MCF 10A (cell line): ENCODE measurements at regions of chr14 and their contacts with region 1.

Region 1: DNA sequence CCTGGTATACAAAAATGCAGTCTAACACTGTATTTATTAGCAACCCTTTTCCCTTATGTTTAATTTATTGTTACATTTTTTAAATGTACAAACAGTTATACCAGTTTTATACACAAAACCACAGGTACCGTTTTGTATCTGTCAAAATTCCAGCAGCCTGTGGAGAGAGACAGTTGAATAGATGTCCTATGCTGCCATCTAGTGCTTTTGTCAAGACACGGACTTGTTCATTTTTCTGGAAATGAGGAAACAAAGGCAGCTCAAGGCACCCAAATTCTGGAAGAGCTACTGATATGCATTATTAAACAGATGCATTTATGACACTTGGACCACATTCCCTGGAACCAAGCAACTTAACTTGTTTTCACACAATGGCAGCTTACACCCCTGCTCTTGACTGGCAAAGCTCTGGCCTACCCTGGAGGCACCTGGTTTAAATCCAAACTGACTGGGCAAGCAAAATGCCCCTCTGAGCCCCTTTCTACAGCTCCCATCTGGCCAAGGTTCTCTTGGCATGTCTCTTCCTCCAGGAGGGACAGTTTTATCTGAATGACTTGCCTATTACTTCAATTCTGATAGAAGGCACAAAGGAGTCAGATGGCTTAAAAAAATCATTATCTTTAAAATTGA is 286.9 kb upstream of the PRKD1 start:
- DNase-seq: peak; percentile 72
- H3K4me3 Mint-ChIP-seq: no peak overlapping the region
- H3K27ac Mint-ChIP-seq: no peak overlapping the region
- H3K4me1 Mint-ChIP-seq: peaks cover 4% of the 10 kb centered on the region
- H3K27me3 Mint-ChIP-seq: no peaks in the 10 kb centered on the region
- CTCF ChIP-seq: peak; percentile 54

Region 2: DNA sequence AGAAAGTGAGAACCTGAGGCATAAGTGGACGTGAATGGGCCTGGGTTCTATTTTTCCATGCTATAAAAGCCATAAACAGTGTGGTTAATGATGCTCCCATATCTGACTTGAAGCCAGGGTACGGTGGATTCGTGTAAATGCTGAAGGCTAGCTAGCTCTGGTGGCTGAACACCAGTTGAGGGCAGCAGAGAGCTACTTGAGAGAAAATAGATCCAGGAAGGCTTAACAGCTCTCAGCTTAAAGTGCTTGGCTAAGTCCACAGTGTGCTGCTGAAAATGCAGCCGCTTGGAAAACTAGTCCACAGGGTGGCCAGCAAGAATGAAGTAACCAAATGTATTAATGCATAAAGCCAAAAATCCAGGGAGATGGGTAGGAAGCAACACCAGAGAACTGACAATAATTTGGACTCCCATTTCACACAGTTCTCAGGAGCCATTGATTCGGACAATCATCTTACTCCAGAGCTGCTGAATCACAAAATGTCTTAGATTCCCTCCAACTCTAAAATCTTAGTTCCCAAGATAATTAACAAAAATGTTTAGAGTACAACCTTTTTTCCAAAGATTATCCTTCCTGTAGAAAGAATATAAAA is 1463.0 kb before region 1 on chr14:
- CTCF ChIA-PET with region 1: interaction called, 48 read pairs
- POLR2A ChIA-PET with region 1: interaction called, 3 read pairs
- intact Hi-C with region 1: loop called (anchors 10 kb)
- DNase-seq: peak; percentile 73
- H3K4me3 Mint-ChIP-seq: no peak overlapping the region
- H3K27ac Mint-ChIP-seq: no peak overlapping the region
- H3K4me1 Mint-ChIP-seq: peaks cover 13% of the 10 kb centered on the region
- H3K27me3 Mint-ChIP-seq: peaks cover 26% of the 10 kb centered on the region
- CTCF ChIP-seq: peak; percentile 46

Region 3: DNA sequence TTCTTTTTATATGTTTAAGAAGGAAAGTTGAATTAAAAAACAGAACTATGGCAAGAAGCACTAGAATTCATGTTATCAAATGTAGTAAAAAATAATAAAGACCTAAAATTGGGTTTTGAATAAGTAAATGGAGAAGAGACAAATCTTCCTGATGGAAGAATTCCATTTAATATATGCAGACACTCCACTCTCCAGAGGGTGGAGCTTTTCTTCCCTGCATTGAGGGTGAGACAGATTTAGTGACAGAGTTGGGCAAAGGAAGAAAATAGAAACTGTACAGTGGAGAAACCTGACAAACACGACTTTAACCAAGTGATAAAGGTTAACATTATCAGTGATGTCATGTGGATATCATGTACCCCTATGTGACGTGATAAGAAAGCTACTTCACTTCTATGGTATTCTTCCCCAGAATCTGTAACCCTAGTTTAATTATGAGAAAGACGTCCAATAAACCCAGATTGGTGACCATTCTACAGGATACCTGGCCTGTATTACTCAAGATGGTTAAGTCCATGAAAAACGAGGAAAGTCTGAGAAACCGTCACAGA is 504.5 kb before region 1 on chr14:
- CTCF ChIA-PET with region 1: no interaction called
- POLR2A ChIA-PET with region 1: no interaction called
- intact Hi-C with region 1: loop called (anchors 10 kb)
- DNase-seq: peak; percentile 20
- H3K4me3 Mint-ChIP-seq: no peak overlapping the region
- H3K27ac Mint-ChIP-seq: no peak overlapping the region
- H3K4me1 Mint-ChIP-seq: peaks cover 12% of the 10 kb centered on the region
- H3K27me3 Mint-ChIP-seq: no peaks in the 10 kb centered on the region
- CTCF ChIP-seq: no peak

Region 4: DNA sequence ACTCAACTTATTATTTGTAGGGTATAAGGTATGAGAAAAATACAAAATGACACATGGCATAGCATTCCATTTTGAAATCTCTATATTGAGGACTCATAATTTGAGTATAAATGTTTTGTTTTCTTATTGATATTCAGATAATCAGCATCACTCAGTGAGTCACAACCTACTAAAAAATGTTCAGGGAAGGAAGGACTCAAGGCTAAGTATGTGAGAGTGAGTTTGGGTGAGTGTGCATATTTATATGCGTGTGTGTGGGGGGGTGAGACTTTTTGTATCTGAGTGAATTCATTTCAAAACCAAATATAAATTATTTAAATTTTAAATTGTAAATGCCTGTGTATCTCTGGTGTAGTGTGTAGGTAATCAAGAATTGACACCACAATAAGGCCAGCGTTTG is 199.1 kb before region 1 on chr14:
- CTCF ChIA-PET with region 1: interaction called, 16 read pairs
- POLR2A ChIA-PET with region 1: no interaction called
- intact Hi-C with region 1: no loop called
- DNase-seq: no peak
- H3K4me3 Mint-ChIP-seq: no peak overlapping the region
- H3K27ac Mint-ChIP-seq: no peak overlapping the region
- H3K4me1 Mint-ChIP-seq: no peaks in the 10 kb centered on the region
- H3K27me3 Mint-ChIP-seq: no peaks in the 10 kb centered on the region
- CTCF ChIP-seq: no peak

Region 5: DNA sequence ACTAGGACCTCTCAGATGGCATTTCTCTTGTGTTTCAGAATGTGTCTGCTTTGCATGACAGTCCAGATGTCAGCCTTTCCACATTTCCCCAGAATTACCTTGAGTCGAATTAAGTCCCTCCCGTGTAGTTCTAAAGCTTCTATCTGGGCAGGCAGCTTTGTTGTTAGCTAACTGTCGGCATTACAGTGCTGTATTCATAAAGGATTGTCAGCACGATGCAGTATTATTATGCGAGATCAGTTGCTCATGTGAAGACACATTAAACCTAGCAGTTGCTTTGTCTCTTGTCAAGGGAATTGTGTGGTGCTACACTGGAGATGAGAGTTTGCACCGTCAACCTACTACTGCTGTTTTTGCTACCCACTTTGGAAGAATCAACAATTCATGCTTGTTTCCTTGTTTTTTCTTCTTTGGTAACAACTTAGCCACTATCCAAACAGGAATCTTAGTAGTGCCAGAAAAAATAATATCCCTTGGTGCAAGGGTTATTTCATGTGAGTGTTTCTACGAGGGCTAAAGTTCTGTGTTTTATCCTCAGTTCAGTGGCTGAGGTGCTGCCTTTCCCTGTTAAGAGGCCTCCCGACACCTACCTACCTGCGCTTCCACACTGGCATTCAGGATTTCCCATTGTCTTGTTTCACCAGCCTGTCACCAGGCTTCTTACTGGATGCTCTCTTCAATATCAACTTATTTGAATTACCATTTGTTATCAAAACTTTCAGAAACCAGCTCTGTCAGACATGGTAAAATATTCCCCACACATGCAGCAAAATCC is 46.4 kb after region 1 on chr14:
- CTCF ChIA-PET with region 1: interaction called, 15 read pairs
- POLR2A ChIA-PET with region 1: no interaction called
- intact Hi-C with region 1: no loop called
- DNase-seq: no peak
- H3K4me3 Mint-ChIP-seq: no peak overlapping the region
- H3K27ac Mint-ChIP-seq: no peak overlapping the region
- H3K4me1 Mint-ChIP-seq: peaks cover 20% of the 10 kb centered on the region
- H3K27me3 Mint-ChIP-seq: no peaks in the 10 kb centered on the region
- CTCF ChIP-seq: no peak

Region 6: DNA sequence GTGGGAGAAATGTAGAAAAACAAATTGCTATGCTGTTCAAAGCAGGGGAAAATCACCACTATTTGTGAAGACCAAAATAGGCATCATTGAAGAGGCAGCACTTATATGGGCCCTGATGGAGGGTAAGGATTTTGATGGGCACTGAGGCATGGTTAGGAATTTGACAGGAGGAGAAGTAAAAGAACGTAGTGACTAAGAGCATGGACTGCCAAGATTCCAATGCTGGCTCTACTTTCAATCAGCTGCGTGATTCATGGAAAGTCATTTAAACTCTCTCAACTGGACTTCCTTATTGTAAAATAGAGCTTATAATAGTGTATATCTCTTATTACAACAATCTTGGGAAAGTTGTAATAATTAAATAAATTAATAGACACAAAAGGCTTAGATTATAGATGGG is 76.6 kb after region 1 on chr14:
- CTCF ChIA-PET with region 1: interaction called, 12 read pairs
- POLR2A ChIA-PET with region 1: no interaction called
- intact Hi-C with region 1: no loop called
- DNase-seq: peak; percentile 62
- H3K4me3 Mint-ChIP-seq: no peak overlapping the region
- H3K27ac Mint-ChIP-seq: no peak overlapping the region
- H3K4me1 Mint-ChIP-seq: peaks cover 5% of the 10 kb centered on the region
- H3K27me3 Mint-ChIP-seq: no peaks in the 10 kb centered on the region
- CTCF ChIP-seq: no peak